ENCODE measurements at regions of chr11 and their contacts with region 1.

Region 1: DNA sequence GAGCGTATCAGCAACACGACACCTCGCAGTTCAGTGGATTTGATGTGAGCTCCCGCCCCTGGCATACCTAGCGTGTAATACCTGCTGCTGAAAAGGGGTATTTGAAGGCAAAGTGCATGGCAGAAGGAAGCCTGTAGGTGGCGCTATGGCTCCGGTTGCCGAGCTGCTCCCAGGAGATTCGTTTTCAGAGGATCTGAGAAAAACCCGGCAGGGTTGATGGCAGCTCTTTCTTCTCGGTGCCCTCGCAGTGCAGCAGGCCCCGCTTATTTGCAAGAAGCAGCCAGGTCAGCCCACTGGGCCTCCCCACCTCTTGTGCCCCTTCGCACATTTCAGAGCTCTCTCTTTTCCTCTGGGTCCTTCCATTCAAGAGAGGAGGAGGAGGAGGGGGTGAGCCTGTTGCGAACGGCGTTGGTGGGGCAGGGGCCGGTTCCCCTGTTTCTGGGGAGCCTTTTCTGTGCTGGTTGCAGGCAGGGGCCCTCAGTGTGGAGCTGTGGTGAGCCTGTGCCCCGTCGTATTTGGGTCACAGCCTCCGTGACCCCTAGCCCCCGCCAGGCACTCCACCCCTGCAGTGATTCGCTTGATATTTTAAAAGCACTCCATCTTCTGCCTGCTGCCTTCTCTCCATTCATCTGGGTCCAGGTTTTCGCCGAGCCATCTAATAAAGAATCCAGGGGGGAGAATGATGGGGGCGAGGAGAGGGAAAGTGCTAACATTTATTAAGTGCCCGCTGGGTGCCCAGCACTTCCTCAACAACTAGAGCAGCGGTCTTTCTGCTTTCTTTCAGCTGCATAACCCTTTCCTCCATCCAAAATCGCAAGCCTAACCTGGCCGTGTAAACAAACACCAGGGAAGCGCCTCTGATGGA is 85.3 kb upstream of the SYT13 start:
- DNase-seq: peak; percentile 45 to 89 (median 69)
- H3K4me3 ChIP-seq: no peak overlapping the region
- H3K27ac ChIP-seq: no peak overlapping the region
- H3K4me1 ChIP-seq: no peaks in the 10 kb centered on the region
- H3K27me3 ChIP-seq: peaks cover 2% of the 10 kb centered on the region
- CTCF ChIP-seq: peak; percentile 77 to 91 (median 88)
- POLR2A ChIP-seq: no peak

Region 2: GRCh38 chr11:45538363-45538762 is 166.9 kb after region 1 on chr11:
- intact Hi-C with region 1: no loop called
- DNase-seq: no peak
- H3K4me3 ChIP-seq: no peak overlapping the region
- H3K27ac ChIP-seq: no peak overlapping the region
- H3K4me1 ChIP-seq: no peaks in the 10 kb centered on the region
- H3K27me3 ChIP-seq: no peaks in the 10 kb centered on the region
- CTCF ChIP-seq: no peak
- POLR2A ChIP-seq: no peak

Region 3: DNA sequence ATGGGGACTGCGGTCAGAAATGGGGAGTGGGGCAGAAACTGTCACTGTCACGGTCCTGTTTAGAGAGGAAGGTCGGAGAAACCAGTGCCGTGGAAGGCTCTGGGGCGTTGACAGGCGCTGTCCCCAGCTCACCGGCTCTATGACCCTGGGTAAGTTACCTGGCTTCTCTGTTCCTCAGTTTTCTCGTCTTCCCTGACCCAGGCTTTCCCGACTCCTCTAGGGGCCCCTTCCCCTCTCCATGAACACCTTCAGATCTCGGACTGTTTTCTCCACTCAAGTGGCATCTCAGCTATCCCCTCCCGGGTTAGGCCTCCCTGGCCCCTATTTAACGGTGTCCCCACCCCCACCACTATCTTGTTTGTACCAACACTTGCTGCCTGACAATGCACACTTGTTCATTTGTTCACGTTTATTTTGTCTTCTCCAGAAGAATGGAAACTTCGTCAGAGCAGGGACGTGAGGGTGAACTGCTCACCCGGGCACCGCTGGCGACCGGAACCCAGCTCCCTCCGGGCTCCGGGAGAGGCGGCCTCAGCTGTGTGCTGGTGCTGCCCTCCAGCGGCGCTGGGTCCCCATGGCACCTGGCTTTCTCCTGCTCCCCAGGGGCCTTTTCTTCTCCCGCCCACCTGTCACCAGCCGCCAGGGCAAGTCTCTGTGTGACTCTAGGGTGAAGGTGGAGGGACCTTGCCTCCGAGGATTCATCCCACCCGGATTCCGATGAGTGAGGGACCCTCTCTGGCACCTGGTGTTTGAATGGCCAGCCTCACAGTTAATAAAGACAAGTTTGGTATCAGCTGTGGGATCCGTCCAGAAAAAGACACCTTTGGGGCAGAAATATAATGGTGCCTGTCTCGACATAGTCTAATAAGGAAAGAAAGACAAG is 400.3 kb after region 1 on chr11:
- intact Hi-C with region 1: loop called in 1 of 2 experiments (anchors 2 kb)
- DNase-seq: peak; percentile 76 to 92 (median 87)
- H3K4me3 ChIP-seq: peak overlapping the region in 2 of 4 donors; percentile 15 to 54
- H3K27ac ChIP-seq: peak overlapping the region in 2 of 5 donors; percentile 10 to 36
- H3K4me1 ChIP-seq: no peaks in the 10 kb centered on the region
- H3K27me3 ChIP-seq: no peaks in the 10 kb centered on the region
- CTCF ChIP-seq: peak; percentile 84 to 95 (median 90)
- POLR2A ChIP-seq: no peak